Heart left ventricle (tissue), 16 donors: ENCODE measurements at regions of chr9 and their contacts with region 1.

Region 1: GRCh38 chr9:2872257-2872935 is 28.5 kb upstream of the PUM3 start:
- DNase-seq: no peak
- ATAC-seq: no peak
- H3K4me3 ChIP-seq: no peak overlapping the region
- H3K27ac ChIP-seq: no peak overlapping the region
- H3K4me1 ChIP-seq: no peaks in the 10 kb centered on the region
- H3K27me3 ChIP-seq: peaks cover 0 to 29% (median 5%) of the 10 kb centered on the region in 9 donors
- CTCF ChIP-seq: peak in 3 of 12 donors; percentile 12 to 27 (median 26)
- POLR2A ChIP-seq: no peak

Region 2: DNA sequence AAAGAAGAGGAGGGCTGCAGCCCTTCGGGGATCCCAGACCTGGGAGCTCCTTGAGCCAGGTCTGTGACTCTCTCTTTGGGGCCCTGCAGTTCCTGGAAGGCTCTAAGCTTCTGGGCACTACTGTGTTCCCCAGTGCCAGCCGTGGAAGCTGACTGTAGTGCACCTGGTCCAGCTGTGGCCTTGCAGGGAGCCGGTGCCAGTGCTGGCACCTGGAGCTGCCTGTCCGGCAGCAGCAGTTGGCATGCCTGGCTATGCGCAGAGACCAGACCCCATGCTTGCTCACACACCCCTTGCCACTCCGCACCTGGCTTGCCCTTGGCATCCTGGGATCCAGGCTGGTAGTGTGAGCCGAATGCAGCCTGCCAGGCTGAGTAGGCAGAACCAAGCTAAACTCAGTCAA is 62.5 kb after region 1 on chr9:
- intact Hi-C with region 1: no loop called
- DNase-seq: peak in 1 of 5 donors; percentile 48
- ATAC-seq: no peak
- H3K4me3 ChIP-seq: no peak overlapping the region
- H3K27ac ChIP-seq: no peak overlapping the region
- H3K4me1 ChIP-seq: no peaks in the 10 kb centered on the region
- H3K27me3 ChIP-seq: peaks cover 0 to 3% (median 0%) of the 10 kb centered on the region in 9 donors
- CTCF ChIP-seq: no peak
- POLR2A ChIP-seq: no peak

Region 3: DNA sequence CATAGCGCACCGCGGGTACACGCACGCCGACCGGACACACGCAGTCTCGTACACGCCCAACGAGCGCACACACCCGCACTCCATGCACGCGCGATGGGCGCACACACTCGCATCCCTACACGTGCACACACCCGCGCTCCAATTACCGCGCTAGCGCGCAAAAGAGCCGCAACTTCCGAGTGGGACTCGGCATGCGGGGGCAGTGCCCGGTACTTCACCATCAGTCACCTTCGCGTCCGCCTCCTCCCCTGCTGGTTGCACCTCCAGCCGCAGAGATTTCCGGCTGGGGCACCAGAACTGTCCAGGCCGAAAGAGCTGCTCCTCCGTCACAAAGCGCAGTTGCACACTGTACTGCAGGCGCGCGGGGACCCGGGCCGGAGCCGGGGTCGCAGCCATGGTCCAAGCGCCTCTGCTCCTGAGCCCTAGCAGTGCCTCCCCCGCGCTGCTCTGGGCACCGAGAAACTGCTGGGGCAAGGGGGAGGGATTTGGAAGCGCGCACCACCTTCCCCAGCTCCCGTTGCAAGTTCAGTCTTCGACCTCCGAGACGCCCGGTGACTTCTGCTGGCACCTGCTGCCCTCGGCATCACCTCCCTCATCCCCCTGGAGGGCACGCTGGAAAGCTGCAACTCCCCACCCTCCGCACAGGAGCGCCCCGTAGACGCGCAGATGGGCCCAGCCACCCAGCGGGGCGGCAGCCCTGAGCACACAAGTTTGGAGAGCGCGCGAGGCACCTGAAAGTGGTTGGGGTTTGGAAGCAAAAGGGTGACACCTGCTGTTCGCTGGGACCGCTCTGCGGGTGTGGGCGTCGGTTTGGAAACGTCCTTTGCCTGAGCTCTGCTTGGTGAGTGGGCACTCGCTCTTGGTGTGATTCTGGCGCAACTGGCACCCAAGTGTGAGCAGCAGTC is 308.9 kb after region 1 on chr9:
- intact Hi-C with region 1: loop called in 1 of 10 experiments (anchors 10 kb)
- DNase-seq: peak in 1 of 5 donors; percentile 60
- ATAC-seq: peak in 3 of 4 donors; percentile 22 to 58 (median 42)
- H3K4me3 ChIP-seq: peak overlapping the region in 7 of 12 donors; percentile 6 to 32 (median 21)
- H3K27ac ChIP-seq: no peak overlapping the region
- H3K4me1 ChIP-seq: peaks cover 0 to 10% (median 2%) of the 10 kb centered on the region in 12 donors
- H3K27me3 ChIP-seq: peaks cover 6 to 50% (median 29%) of the 10 kb centered on the region in 9 donors
- CTCF ChIP-seq: peak in 7 of 12 donors; percentile 5 to 37 (median 13)
- POLR2A ChIP-seq: no peak